ENCODE measurements at regions of chrX and their contacts with region 1.

Region 1: GRCh38 chrX:110146521-110146920 is 143.6 kb downstream of the TMEM164 start:
- DNase-seq: peak; percentile 72
- ATAC-seq: peak; percentile 82
- H3K4me3 ChIP-seq: no peak overlapping the region
- H3K27ac ChIP-seq: no peak overlapping the region
- H3K4me1 ChIP-seq: no peaks in the 10 kb centered on the region
- H3K27me3 ChIP-seq: no peaks in the 10 kb centered on the region
- CTCF ChIP-seq: peak; percentile 74

Region 2: DNA sequence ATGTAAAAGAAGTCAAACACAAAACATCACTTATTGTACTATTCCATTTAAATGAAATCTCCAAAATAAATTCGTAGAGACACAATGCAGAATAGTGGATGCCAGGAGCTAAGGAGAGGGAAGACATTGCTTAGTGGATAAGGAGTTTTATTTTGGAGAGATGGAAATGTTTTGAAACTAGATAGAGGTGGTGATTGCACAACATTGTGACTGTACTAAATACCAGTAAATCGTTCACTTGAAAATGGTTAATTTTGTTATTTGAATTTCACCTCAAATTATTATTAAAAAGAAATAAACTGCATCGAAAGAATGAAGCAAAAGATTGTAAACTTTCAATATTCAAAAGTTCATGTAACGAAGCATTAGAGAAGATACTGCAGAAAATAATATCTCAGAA is 403.8 kb before region 1 on chrX:
- CTCF ChIA-PET with region 1: no interaction called
- POLR2A ChIA-PET with region 1: no interaction called
- intact Hi-C with region 1: no loop called
- DNase-seq: no peak
- ATAC-seq: no peak
- H3K4me3 ChIP-seq: no peak overlapping the region
- H3K27ac ChIP-seq: no peak overlapping the region
- H3K4me1 ChIP-seq: peaks cover 16% of the 10 kb centered on the region; the same call in 1 of the 2 replicates
- H3K27me3 ChIP-seq: no peaks in the 10 kb centered on the region
- CTCF ChIP-seq: no peak

Region 3: GRCh38 chrX:110412971-110413721 is 266.6 kb after region 1 on chrX:
- CTCF ChIA-PET with region 1: interaction called, 10 read pairs
- POLR2A ChIA-PET with region 1: no interaction called
- intact Hi-C with region 1: no loop called
- DNase-seq: peak; percentile 82
- ATAC-seq: peak; percentile 64
- H3K4me3 ChIP-seq: peak overlapping the region; percentile 28
- H3K27ac ChIP-seq: no peak overlapping the region
- H3K4me1 ChIP-seq: peaks cover 65% of the 10 kb centered on the region
- H3K27me3 ChIP-seq: no peaks in the 10 kb centered on the region
- CTCF ChIP-seq: peak; percentile 89